ENCODE measurements at regions of chr17 and their contacts with region 1.

Region 1: DNA sequence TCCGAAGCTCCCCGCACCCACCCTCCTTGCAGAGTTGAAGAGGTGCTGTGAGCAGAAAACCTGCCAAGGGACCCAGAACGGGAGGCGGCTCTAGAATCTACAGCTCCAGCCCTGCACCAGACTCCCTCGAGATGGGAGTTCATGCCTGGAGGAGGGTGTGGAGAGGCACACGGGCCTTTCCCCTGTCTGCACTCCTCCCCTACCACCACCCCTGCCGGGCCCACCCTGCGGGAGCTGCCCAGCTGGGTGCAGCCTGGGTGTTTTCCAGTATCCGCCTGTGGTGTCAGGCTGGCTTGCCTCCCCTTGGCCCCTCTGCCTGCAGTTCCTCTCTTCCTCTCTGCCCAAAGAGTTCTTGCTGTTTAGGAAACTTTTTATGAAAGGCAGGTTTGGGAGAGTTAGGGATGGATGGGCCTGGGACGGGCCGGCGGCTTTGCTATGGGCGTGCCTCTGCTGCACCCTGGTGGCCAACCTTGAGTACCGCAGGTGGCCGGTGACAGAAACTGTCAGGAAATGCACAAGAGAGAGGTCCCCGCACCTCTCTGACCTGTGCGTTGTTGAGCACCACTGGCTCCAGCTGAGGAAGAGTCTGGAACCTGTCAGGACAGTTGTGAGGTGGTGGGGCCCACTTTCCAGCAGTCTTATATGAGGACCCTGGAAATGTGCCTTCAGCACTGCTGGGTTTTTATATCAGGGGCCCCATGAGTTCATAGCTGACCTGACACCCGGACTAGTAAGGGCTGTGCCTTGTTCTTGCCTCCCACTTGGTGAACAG is 354.1 kb downstream of the SEC14L1 start:
- DNase-seq: peak; percentile 52 to 89 (median 75)
- ATAC-seq: peak; percentile 75
- H3K4me3 ChIP-seq: no peak overlapping the region
- H3K4me3 Mint-ChIP-seq: no peak overlapping the region
- H3K27ac ChIP-seq: peak overlapping the region in 1 of 2 experiments; percentile 28
- H3K27ac Mint-ChIP-seq: peak overlapping the region; percentile 89
- H3K4me1 ChIP-seq: peaks cover 31% of the 10 kb centered on the region
- H3K4me1 Mint-ChIP-seq: peaks cover 25% of the 10 kb centered on the region
- H3K27me3 ChIP-seq: no peaks in the 10 kb centered on the region
- H3K27me3 Mint-ChIP-seq: no peaks in the 10 kb centered on the region
- CTCF ChIP-seq: peak; percentile 99

Region 2: GRCh38 chr17:77096570-77097214 is 398.2 kb before region 1 on chr17:
- CTCF ChIA-PET with region 1: no interaction called
- POLR2A ChIA-PET with region 1: no interaction called
- intact Hi-C with region 1: loop called in 1 of 2 experiments (anchors 10 kb)
- DNase-seq: peak in 2 of 9 experiments; percentile 51 to 69
- ATAC-seq: peak; percentile 64
- H3K4me3 ChIP-seq: no peak overlapping the region
- H3K4me3 Mint-ChIP-seq: peak overlapping the region; percentile 13
- H3K27ac ChIP-seq: no peak overlapping the region
- H3K27ac Mint-ChIP-seq: peak overlapping the region; percentile 96
- H3K4me1 ChIP-seq: peaks cover 28% of the 10 kb centered on the region
- H3K4me1 Mint-ChIP-seq: peaks cover 44% of the 10 kb centered on the region
- H3K27me3 ChIP-seq: no peaks in the 10 kb centered on the region
- H3K27me3 Mint-ChIP-seq: no peaks in the 10 kb centered on the region
- CTCF ChIP-seq: peak; percentile 76

Region 3: GRCh38 chr17:77382966-77383612 is 111.8 kb before region 1 on chr17:
- CTCF ChIA-PET with region 1: interaction called, 3 read pairs
- POLR2A ChIA-PET with region 1: no interaction called
- intact Hi-C with region 1: loop called in 1 of 2 experiments (anchors 1 kb)
- DNase-seq: no peak
- ATAC-seq: no peak
- H3K4me3 ChIP-seq: peak overlapping the region; percentile 30 to 34
- H3K4me3 Mint-ChIP-seq: peak overlapping the region; percentile 75
- H3K27ac ChIP-seq: peak overlapping the region in 1 of 2 experiments; percentile 40
- H3K27ac Mint-ChIP-seq: peak overlapping the region; percentile 91
- H3K4me1 ChIP-seq: peaks cover 95% of the 10 kb centered on the region
- H3K4me1 Mint-ChIP-seq: peaks cover 89% of the 10 kb centered on the region
- H3K27me3 ChIP-seq: no peaks in the 10 kb centered on the region
- H3K27me3 Mint-ChIP-seq: no peaks in the 10 kb centered on the region
- CTCF ChIP-seq: no peak

Region 4: DNA sequence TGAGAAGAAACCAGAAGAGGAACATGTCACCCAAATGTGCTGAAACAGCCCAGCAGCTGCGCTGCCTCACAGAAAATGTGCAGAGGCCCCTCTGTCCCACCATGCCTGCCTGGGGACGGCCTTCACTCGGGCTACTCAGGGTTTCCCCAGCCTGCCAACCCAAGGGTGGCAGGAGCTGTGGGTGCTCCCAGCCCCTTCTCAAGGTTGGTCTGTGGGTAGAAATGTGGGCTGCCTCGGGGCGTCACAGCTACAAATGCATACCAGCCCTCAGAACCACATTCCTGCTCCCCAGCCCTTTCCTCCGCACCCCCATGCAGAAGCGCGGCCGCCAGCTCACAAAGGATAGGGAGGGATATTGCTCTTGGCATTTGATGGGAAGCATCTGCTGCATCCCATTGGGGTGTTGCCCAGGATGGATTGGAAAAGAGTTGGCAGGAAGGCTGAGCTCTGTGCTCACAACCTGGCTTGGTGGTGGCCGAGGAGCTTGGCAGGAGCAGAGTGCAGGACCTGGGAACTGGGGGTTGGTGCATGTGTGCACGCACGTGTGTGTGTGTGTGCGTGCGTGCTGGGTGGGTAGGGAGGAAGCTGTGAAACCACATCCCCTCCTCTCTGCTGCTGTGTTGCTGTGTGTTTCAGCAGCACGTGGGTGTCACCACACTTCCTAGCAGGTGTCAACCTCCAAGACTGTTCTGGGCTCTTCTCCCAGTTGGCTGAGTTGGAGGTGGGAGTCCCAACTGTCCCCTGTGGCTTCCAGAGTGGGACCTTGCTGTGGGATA is 49.7 kb before region 1 on chr17:
- CTCF ChIA-PET with region 1: interaction called, 19 read pairs
- POLR2A ChIA-PET with region 1: interaction called, 6 read pairs
- intact Hi-C with region 1: no loop called
- DNase-seq: peak; percentile 75 to 99 (median 85)
- ATAC-seq: peak; percentile 62
- H3K4me3 ChIP-seq: peak overlapping the region; percentile 32 to 38
- H3K4me3 Mint-ChIP-seq: peak overlapping the region; percentile 82
- H3K27ac ChIP-seq: peak overlapping the region; percentile 64 to 72
- H3K27ac Mint-ChIP-seq: peak overlapping the region; percentile 97
- H3K4me1 ChIP-seq: peaks cover 92% of the 10 kb centered on the region
- H3K4me1 Mint-ChIP-seq: peaks cover 90% of the 10 kb centered on the region
- H3K27me3 ChIP-seq: no peaks in the 10 kb centered on the region
- H3K27me3 Mint-ChIP-seq: no peaks in the 10 kb centered on the region
- CTCF ChIP-seq: no peak

Region 5: GRCh38 chr17:77465358-77466041 is 29.4 kb before region 1 on chr17:
- CTCF ChIA-PET with region 1: interaction called, 6 read pairs
- POLR2A ChIA-PET with region 1: interaction called, 3 read pairs
- intact Hi-C with region 1: loop called in 1 of 2 experiments (anchors 2 kb)
- DNase-seq: peak; percentile 58 to 93 (median 82)
- ATAC-seq: peak; percentile 91
- H3K4me3 ChIP-seq: peak overlapping the region; percentile 29 to 51
- H3K4me3 Mint-ChIP-seq: peak overlapping the region; percentile 71
- H3K27ac ChIP-seq: peak overlapping the region; percentile 28 to 68
- H3K27ac Mint-ChIP-seq: peak overlapping the region; percentile 94
- H3K4me1 ChIP-seq: peaks cover 94% of the 10 kb centered on the region
- H3K4me1 Mint-ChIP-seq: peaks cover 87% of the 10 kb centered on the region
- H3K27me3 ChIP-seq: no peaks in the 10 kb centered on the region
- H3K27me3 Mint-ChIP-seq: no peaks in the 10 kb centered on the region
- CTCF ChIP-seq: no peak

Region 6: DNA sequence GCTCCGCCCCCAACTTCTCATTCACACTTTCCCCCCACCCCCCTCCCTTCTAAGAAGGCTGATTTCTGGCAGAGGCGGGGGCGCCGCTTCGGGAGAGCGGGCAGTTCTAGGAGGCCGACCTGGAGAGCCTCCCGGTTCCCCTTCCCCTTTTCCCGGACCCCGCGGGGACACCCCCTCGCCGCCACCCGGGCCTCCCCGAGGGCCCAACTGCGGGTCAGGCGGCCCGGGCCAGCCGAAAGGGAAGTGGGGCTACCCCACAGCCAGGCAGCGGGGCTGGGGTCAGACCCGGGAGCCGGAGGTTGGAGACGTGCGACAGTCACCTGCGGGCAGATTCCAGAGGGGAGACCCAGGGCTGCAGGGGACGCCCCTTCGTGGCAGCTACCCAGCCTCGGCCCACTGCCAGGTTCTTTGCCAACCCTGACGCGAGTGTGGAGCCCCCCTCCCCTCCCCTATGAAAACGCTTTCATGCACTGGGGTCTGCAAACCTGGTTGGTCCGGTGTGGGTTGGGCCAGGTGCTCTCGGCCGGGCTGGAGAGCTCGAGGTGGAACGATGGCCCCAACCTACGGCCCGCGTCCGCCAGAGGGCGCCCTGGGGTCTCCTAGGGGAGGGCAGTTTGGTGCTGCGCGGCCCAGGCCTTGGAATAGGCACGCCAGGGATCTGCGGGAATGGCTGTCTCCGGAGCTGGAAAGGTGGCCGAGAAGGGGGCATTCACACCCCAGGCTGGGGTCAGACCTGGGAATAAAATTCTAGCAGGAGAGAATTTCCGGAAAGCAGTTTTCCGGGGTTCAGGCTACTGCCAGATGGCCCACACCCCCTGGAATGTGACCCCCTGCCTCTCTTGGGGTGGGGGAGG is 865.7 kb after region 1 on chr17:
- CTCF ChIA-PET with region 1: no interaction called
- POLR2A ChIA-PET with region 1: no interaction called
- intact Hi-C with region 1: no loop called
- DNase-seq: peak; percentile 79 to 95 (median 87)
- ATAC-seq: no peak
- H3K4me3 ChIP-seq: peak overlapping the region; percentile 56 to 64
- H3K4me3 Mint-ChIP-seq: peak overlapping the region; percentile 88
- H3K27ac ChIP-seq: peak overlapping the region; percentile 6 to 62
- H3K27ac Mint-ChIP-seq: peak overlapping the region; percentile 87
- H3K4me1 ChIP-seq: peaks cover 31% of the 10 kb centered on the region
- H3K4me1 Mint-ChIP-seq: peaks cover 43% of the 10 kb centered on the region
- H3K27me3 ChIP-seq: no peaks in the 10 kb centered on the region
- H3K27me3 Mint-ChIP-seq: no peaks in the 10 kb centered on the region
- CTCF ChIP-seq: peak; percentile 84